Activated CD4-positive, alpha-beta T cell treated with anti-CD3 and anti-CD28 coated beads for 36 hours (primary cell): ENCODE measurements at regions of chr2 and their contacts with region 1.

Region 1: DNA sequence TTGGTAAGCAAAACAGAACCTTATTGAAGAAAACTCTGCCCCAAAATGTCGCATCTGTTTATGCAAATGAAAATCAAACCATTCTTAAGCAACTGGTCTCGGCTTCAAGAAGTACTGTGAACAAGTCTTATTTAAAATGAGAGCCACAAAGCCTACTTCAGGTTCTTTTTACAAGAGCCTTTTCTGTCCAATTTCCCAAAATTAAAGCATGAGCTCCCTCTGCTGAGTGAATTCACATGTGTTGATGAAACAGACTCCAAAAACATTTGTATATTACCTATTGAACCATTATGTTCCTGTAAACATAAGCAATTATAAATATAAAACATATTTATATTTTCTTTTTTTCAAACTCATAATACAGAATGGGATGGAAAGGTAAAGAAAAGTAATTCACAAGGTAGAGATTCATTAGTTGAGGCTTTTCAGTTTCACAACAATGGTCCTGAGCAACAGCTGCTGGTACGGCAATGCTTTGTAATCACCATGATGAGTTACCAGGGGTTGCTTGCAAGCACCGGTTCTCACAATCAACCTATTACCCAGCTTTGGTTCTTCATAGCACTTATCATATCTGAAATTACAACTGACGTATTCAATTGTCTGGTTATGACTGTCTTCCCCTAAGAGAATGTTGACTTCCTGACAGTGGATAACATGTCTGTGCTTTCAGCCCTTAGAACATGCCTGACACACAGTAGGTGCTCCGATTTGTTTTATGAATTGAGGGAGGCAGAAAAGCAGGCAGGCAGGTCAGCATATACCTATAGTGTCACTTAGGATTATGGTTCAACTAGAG is 108.4 kb upstream of the BZW1 start:
- DNase-seq: peak; percentile 61
- ATAC-seq: peak; percentile 85
- H3K4me3 Mint-ChIP-seq: peak overlapping the region; percentile 37
- H3K27ac Mint-ChIP-seq: peak overlapping the region; percentile 88
- H3K4me1 Mint-ChIP-seq: peaks cover 62% of the 10 kb centered on the region
- H3K27me3 Mint-ChIP-seq: peaks cover 1% of the 10 kb centered on the region

Region 2: DNA sequence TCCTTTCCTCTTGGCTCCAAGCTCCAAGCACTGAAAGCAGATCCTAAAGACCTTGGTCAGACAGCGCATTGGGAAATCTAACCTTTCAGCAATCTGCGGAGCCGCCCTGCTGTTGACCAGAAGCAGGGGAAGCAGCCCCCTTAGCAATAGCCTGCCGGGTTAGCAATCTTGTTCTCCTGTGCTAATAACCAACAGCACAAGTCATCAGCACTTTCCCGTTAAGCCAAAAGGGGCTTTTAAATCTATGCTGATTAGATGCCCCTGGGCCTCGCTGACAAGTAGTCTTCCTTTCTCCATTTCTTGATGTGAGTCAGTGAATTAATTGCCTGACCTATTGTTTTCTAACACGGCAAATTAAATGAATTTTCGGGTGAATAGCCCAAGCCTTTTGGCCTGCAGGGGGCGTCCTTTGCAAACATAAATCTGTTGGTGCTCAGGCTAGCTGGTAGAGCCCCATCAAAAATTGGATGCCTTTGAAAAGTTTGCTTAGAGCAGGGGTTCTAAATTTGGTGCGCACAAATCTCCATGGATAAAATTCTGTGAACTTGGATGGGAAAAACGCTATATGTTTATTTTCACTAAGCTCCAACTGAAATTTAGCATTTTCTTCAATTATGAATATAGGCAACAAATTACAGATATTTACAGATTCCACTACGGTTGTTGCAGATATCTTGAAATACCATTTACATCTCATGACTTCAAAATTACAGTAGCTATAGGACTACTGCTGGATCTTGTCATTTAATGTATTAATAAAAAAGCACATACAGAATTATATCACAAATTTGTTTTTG is 723.3 kb before region 1 on chr2:
- CTCF ChIA-PET with region 1: no interaction called
- POLR2A ChIA-PET with region 1: no interaction called
- intact Hi-C with region 1: loop called (anchors 1 to 2 kb)
- DNase-seq: peak; percentile 91
- ATAC-seq: no peak
- H3K4me3 Mint-ChIP-seq: no peak overlapping the region
- H3K27ac Mint-ChIP-seq: no peak overlapping the region
- H3K4me1 Mint-ChIP-seq: peaks cover 21% of the 10 kb centered on the region
- H3K27me3 Mint-ChIP-seq: no peaks in the 10 kb centered on the region

Region 3: GRCh38 chr2:200509612-200510433 is 193.5 kb before region 1 on chr2 and contains the start of gene KCTD18:
- CTCF ChIA-PET with region 1: no interaction called
- POLR2A ChIA-PET with region 1: no interaction called
- intact Hi-C with region 1: loop called in 1 of 2 experiments (anchors 5 kb)
- DNase-seq: peak; percentile 94
- ATAC-seq: peak; percentile 98
- H3K4me3 Mint-ChIP-seq: peak within 1 kb of the TSS; percentile 85
- H3K27ac Mint-ChIP-seq: peak within 1 kb of the TSS; percentile 92
- H3K4me1 Mint-ChIP-seq: peaks cover 30% of the 10 kb centered on the region
- H3K27me3 Mint-ChIP-seq: no peaks in the 10 kb centered on the region
- total RNA-seq, gene KCTD18: 15.9 to 17.4 TPM

Region 4: DNA sequence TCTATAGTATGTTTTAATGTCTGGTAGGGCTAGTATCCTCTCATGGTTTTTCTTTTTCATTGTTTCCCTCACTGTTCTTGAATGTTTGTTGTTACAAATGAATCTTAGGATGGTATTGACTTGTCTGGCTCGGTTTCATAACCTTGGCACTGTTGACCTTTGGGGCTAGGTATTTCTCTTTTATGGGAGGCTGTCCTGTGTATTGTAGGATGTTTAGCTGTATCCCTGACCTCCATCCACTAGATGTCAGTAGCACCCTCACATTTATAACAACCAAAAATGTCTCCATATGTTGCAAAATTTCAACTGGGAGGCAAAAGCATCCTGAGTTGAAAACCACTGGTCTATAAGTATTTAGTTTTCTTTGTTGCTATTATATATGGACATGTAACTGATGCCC is 124.5 kb before region 1 on chr2:
- CTCF ChIA-PET with region 1: interaction called, 8 read pairs
- POLR2A ChIA-PET with region 1: no interaction called
- intact Hi-C with region 1: loop called (anchors 2 kb)
- DNase-seq: no peak
- ATAC-seq: peak; percentile 83
- H3K4me3 Mint-ChIP-seq: no peak overlapping the region
- H3K27ac Mint-ChIP-seq: no peak overlapping the region
- H3K4me1 Mint-ChIP-seq: peaks cover 17% of the 10 kb centered on the region
- H3K27me3 Mint-ChIP-seq: no peaks in the 10 kb centered on the region

Region 5: DNA sequence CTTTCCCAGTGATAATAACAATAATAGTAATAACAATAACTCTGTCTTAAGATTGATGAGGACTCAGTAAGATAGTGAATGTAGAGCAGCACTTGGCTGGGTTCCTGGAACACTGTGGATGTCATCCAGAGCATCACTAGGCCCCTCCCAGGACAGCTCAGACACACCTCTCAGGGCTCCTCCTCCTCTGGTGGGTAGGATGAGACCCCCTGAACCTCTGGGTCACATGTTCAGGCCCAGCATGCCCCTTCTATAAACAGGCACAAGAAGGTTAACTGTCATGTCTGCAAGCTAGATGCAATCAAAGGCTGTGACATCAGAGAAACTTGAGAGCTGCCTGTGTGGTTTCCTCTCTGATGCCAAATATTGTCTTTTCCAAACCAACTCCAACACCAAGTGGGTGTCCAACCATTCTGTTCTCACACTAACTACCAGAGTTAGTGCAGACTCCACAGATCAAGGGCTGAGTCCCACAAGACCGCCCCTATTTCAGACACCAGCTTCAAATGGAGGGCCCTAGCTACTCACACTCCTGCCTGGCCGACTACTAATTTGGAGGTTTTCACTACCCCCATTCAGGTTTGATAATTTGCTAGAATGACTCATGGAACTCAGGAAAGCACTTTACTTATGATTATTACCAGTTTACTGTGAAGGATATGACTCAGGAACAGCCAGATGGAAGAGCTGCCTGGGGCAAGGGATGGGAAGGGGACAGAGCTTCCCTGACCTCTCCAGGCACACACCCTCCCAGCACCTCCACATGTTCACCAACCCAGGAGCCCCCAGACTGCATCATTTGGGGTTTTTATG is 62.0 kb after region 1 on chr2:
- CTCF ChIA-PET with region 1: interaction called, 9 read pairs
- POLR2A ChIA-PET with region 1: no interaction called
- intact Hi-C with region 1: loop called in 1 of 2 experiments (anchors 1 kb)
- DNase-seq: peak; percentile 69
- ATAC-seq: peak; percentile 90
- H3K4me3 Mint-ChIP-seq: peak overlapping the region; percentile 7
- H3K27ac Mint-ChIP-seq: peak overlapping the region; percentile 82
- H3K4me1 Mint-ChIP-seq: peaks cover 30% of the 10 kb centered on the region
- H3K27me3 Mint-ChIP-seq: no peaks in the 10 kb centered on the region